ENCODE measurements at regions of chr1 and their contacts with region 1.

Region 1: DNA sequence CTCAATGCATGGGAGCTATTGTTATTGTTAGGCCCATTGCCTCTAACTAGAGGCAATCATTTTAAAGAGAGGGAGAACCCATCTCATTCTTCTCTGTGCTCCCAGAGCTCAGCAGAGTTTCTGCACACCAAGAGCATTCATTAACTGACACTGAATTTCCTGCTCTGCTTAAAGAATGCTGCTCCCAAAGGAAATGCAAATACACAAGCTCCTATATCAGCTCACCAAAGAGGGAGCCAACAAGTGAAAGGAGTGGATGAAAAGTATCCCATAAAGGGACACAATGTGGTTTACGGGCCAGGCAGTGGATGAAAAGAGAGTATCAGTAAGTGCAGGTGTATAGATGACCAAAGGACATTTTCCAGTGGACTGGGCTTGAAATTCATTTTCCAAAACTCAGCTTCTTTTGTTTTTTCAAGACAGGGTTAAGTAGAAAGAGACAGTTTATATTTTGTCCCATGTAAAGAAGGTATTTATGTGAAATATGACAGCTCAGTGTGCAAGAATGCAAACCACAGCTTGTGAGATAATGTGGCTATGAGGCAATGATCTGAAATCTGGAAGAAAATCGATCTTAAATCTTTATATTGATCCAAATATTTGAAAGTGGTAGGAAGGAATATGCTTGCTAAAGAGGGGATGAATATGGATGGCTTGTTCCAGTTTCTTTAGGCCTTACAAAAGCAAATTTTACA is 207.7 kb upstream of the CAMK1G start:
- DNase-seq: no peak
- H3K4me3 Mint-ChIP-seq: no peak overlapping the region
- H3K27ac Mint-ChIP-seq: peak overlapping the region; percentile 84
- H3K4me1 Mint-ChIP-seq: peaks cover 69% of the 10 kb centered on the region
- H3K27me3 Mint-ChIP-seq: no peaks in the 10 kb centered on the region
- CTCF ChIP-seq: no peak

Region 2: GRCh38 chr1:209335178-209335577 is 40.6 kb before region 1 on chr1:
- CTCF ChIA-PET with region 1: no interaction called
- POLR2A ChIA-PET with region 1: no interaction called
- intact Hi-C with region 1: no loop called
- DNase-seq: peak; percentile 75
- H3K4me3 Mint-ChIP-seq: no peak overlapping the region
- H3K27ac Mint-ChIP-seq: no peak overlapping the region
- H3K4me1 Mint-ChIP-seq: peaks cover 5% of the 10 kb centered on the region
- H3K27me3 Mint-ChIP-seq: no peaks in the 10 kb centered on the region
- CTCF ChIP-seq: peak; percentile 96

Region 3: DNA sequence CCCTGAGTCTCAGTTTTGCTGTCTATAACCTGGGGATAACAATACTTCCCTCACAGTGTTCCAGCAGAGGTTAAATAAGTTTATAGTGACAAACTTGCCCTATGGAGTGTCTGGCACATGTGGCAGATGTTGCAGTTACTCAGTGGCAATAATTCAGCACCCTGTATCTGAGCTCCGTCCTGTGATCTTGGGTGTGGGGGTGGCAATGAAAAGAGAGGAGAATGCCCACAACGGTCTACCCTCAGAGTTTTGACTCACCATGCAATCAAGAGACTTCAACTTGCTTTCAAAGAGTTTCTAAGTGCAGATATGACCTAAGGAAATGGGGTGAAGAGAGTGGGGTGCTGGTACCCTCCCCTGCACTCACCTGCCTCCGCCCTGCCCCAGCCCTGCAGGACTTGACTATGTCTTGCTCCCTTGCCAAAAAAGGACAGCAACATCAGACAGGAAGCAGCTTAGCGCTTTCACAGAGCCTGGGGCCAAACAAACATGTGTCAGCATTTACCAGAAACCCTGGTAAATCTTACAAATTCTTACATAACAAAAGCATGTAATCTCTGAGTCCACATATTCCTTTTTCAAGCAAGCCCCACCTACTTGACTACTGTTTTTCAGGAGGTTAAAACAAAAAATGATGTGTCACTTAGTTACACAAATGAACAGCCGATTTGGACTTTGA is 22.6 kb after region 1 on chr1:
- CTCF ChIA-PET with region 1: interaction called, 10 read pairs
- POLR2A ChIA-PET with region 1: interaction called, 6,956 read pairs
- intact Hi-C with region 1: loop called (anchors 1 kb)
- DNase-seq: peak; percentile 100
- H3K4me3 Mint-ChIP-seq: peak overlapping the region; percentile 29
- H3K27ac Mint-ChIP-seq: peak overlapping the region; percentile 79
- H3K4me1 Mint-ChIP-seq: peaks cover 28% of the 10 kb centered on the region
- H3K27me3 Mint-ChIP-seq: no peaks in the 10 kb centered on the region
- CTCF ChIP-seq: no peak